ENCODE measurements at regions of chr10 and their contacts with region 1.

Region 1: DNA sequence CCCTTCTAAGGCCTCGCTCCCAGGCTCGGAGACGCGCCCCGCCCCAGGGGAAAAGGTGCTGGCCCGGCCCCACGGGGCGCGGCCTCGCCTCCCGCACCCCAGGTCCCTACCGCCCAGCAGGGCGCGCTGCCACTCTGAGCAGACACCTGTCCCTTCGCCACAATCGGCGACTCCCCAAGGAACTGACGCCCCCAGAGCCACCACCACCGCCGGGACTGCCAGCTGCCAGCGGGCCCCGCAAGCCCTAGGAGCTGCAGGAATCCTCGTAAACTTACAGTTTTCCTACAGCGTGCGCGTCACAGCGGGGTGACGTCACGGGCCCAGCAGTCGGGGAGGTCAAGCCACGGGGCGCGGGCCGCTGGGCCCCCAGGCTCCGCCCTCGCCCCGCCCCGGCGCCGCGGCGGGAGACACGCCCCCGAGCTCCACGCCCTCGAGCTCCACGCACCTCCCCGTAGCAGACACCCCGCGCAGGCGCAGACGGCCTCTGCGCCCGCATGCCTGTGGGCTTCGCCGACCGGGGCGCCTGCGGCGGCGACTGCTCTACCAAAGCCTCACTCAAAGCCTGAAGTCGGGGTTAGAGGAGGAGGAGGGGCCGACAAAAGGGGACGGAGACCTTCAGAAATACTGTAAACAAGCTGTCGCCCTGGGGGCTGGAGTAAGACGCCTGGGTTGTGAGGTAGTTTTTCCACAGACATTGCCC is at the start of gene ZNF438:
- DNase-seq: peak; percentile 96 to 99 (median 97)
- ATAC-seq: peak; percentile 95
- H3K4me3 ChIP-seq: peak within 1 kb of the TSS; percentile 56 to 60
- H3K27ac ChIP-seq: peak within 1 kb of the TSS; percentile 99 to 100
- H3K4me1 ChIP-seq: peaks cover 7 to 48% of the 10 kb centered on the region in 2 donors
- H3K27me3 ChIP-seq: no peaks in the 10 kb centered on the region
- CTCF ChIP-seq: peak; percentile 24 to 65
- polyA plus RNA-seq, gene ZNF438: 9.8 to 11.4 (median 10.7) TPM

Region 2: GRCh38 chr10:31318854-31319601 is 287.3 kb after region 1 on chr10 and contains the start of gene ZEB1:
- intact Hi-C with region 1: loop called in 1 of 2 experiments (anchors 10 kb)
- DNase-seq: peak; percentile 59 to 91 (median 86)
- ATAC-seq: peak; percentile 89
- H3K4me3 ChIP-seq: peak within 1 kb of the TSS; percentile 85 to 89
- H3K27ac ChIP-seq: peak within 1 kb of the TSS; percentile 89 to 94
- H3K4me1 ChIP-seq: peaks cover 0 to 26% of the 10 kb centered on the region in 2 donors
- H3K27me3 ChIP-seq: peaks cover 8 to 36% of the 10 kb centered on the region in 2 donors
- CTCF ChIP-seq: peak; percentile 40 to 53
- polyA plus RNA-seq, gene ZEB1: 29.9 to 40.8 (median 35.1) TPM